ENCODE measurements at regions of chr17 and their contacts with region 1.

Region 1: GRCh38 chr17:27601069-27601975 is 29.7 kb upstream of the LGALS9 start:
- DNase-seq: peak; percentile 87
- ATAC-seq: peak; percentile 43
- H3K4me3 Mint-ChIP-seq: no peak overlapping the region
- H3K27ac Mint-ChIP-seq: no peak overlapping the region
- H3K4me1 Mint-ChIP-seq: peaks cover 19% of the 10 kb centered on the region
- H3K27me3 Mint-ChIP-seq: no peaks in the 10 kb centered on the region

Region 2: GRCh38 chr17:27293898-27294688 is 307.2 kb before region 1 on chr17 and contains the start of gene WSB1:
- CTCF ChIA-PET with region 1: interaction called, 10 read pairs
- DNase-seq: peak; percentile 93
- ATAC-seq: peak; percentile 88
- H3K4me3 Mint-ChIP-seq: peak within 1 kb of the TSS; percentile 93
- H3K27ac Mint-ChIP-seq: peak within 1 kb of the TSS; percentile 99
- H3K4me1 Mint-ChIP-seq: peaks cover 35% of the 10 kb centered on the region
- H3K27me3 Mint-ChIP-seq: no peaks in the 10 kb centered on the region
- total RNA-seq, gene WSB1: 109 to 177 TPM

Region 3: DNA sequence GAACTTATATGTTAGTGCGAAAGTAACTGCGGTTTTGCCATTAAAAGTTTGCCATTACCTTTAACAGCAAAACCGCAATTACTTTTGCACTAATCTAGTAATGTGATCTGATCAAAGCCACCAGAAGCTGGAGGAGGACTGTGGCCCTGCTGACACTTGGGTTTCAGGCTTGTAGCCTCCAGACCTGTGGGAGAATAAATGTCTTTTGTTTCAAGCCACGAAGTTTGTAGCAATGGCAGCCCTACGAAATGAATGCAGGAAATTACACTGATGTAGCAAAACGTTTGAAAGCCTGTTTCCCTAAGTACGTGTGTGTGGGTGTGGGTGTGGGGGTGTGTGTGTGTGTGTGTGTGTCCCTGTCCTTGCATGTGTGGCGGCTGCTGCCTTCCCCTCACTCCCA is 240.8 kb before region 1 on chr17:
- CTCF ChIA-PET with region 1: interaction called, 124 read pairs
- DNase-seq: no peak
- ATAC-seq: no peak
- H3K4me3 Mint-ChIP-seq: no peak overlapping the region
- H3K27ac Mint-ChIP-seq: no peak overlapping the region
- H3K4me1 Mint-ChIP-seq: peaks cover 14% of the 10 kb centered on the region
- H3K27me3 Mint-ChIP-seq: peaks cover 7% of the 10 kb centered on the region

Region 4: DNA sequence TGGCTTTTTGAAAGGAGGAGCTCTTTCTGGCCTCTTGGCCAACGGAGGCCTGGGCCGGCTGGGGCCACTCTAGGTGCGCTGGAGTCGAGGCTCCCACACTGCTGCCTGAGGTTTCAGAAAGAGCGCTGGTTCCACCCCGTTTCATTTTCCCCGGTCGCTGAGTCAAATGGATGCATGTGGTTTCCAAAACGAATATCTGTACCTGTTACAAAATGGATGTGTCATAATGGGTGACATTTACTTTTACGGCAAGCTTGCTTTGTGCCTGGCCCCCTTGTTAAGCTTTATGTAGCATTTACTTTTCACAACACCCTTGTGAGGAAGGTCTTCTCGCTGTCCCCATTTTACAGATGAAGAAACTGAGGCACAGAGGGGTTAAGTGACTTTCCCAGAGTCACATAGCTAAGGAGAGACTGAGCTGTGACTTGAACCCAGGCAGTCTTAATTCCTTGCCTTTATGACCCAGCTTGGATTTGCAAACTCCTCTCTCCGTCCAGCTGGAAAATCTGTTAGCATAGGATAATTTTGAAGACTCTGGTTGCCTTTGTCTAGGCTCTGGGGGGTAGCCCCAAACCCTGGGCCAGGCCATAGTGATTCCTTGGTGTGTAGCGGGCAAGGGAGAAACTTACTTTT is 134.5 kb before region 1 on chr17:
- CTCF ChIA-PET with region 1: interaction called, 33 read pairs
- DNase-seq: peak; percentile 91
- ATAC-seq: peak; percentile 86
- H3K4me3 Mint-ChIP-seq: peak overlapping the region; percentile 63
- H3K27ac Mint-ChIP-seq: peak overlapping the region; percentile 96
- H3K4me1 Mint-ChIP-seq: peaks cover 90% of the 10 kb centered on the region
- H3K27me3 Mint-ChIP-seq: no peaks in the 10 kb centered on the region

Region 5: DNA sequence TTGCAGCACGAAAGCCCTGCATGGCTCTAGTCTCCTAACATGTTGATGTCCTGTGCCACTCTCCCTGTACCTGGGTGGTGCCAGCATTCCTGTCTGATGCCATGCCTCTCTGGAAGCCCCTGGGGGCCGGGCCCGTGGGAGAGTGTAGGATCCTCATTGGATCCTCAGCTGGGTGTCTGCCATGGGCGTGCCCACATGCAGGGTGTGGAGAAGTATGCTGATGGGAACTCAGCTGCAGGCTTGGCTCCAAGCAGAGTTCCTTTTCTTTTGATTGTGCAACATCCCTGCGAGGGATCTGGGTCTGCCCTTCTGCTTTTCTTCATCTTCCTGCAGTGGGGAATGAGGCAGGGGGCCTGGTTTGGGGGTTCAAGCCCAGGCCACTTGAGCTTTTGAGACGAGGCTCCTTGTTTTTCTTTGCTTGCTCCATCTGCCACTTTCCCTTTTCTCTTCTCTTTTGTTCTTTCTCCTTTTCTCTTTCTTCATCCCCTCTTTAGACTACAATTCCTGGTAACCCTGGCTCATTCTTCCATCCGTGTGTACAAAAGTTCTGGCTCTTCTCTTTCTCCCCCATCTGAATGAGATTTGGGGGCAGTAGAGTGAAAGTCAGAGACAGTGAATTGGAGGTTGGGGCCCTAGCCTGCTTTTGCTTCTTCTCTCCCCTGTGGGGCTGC is 112.1 kb before region 1 on chr17:
- CTCF ChIA-PET with region 1: no interaction called
- DNase-seq: no peak
- ATAC-seq: no peak
- H3K4me3 Mint-ChIP-seq: no peak overlapping the region
- H3K27ac Mint-ChIP-seq: no peak overlapping the region
- H3K4me1 Mint-ChIP-seq: peaks cover 31% of the 10 kb centered on the region
- H3K27me3 Mint-ChIP-seq: no peaks in the 10 kb centered on the region

Region 6: DNA sequence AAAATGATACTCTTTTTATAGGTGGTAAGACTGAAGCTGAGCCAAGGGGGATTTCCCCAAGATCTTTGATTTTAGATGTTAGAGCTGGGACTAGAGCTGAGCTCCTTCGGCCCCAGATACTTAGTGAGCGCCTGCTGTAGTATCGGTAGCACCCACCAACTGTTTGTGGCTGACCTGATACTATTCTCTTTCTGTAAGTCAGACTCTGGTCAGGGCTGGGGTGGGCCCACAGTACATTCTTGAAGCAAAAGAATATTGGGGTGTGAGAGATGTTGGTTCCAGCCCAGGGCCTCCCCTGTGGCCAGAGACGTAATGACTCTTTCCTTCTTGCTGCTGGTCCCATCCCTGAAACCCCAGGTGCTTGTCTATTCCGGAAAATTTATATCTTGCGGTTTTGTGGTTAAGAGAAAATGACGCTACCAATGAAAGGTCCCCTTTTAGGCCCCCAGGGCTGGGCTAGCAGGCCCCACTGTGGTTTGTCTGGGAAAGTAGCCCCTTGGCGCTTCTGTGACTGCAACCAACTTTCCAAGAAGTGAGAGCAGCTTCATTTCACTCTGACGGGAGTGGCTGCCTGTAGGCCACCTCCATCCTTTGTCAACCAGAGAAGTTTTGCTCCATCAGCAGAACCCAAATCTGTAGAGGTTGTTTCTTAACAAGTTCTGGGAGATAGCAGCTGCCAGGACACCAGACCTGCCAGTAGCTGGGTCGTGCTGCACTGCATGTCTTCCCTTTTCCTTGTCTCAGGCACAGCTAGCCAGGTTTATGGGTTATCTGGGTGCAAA is 56.8 kb before region 1 on chr17:
- CTCF ChIA-PET with region 1: interaction called, 39 read pairs
- DNase-seq: peak; percentile 92
- ATAC-seq: peak; percentile 80
- H3K4me3 Mint-ChIP-seq: peak overlapping the region; percentile 53
- H3K27ac Mint-ChIP-seq: peak overlapping the region; percentile 80
- H3K4me1 Mint-ChIP-seq: peaks cover 78% of the 10 kb centered on the region
- H3K27me3 Mint-ChIP-seq: no peaks in the 10 kb centered on the region

Region 7: DNA sequence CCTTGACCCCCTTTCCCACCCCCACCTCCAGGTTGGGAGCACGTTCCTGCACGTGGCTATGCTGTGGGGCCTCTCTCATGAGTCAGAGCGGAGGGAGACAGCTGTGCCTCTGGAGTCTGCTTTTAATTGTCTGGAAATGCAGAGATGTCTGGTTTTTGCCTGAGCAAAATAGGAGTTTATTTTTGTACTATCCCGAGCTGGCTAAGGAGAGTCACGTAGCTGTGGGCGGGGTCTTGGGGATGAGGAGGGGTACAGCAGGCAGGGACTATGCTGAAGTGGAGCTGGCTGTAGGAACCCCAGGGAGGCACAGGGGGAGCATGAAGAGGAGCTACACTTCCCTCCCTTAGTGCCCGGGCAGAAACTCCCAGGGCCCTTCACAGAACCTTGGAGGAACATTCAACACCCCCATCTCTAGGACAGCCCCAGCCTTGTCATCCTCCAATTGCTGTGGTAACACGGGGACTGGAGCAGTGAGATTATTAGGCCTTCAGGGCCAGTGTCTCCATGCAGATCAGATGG is 15.1 kb before region 1 on chr17:
- CTCF ChIA-PET with region 1: interaction called, 48 read pairs
- DNase-seq: no peak
- ATAC-seq: no peak
- H3K4me3 Mint-ChIP-seq: no peak overlapping the region
- H3K27ac Mint-ChIP-seq: no peak overlapping the region
- H3K4me1 Mint-ChIP-seq: peaks cover 11% of the 10 kb centered on the region
- H3K27me3 Mint-ChIP-seq: no peaks in the 10 kb centered on the region

Region 8: GRCh38 chr17:27640790-27641189 is 39.5 kb after region 1 on chr17:
- CTCF ChIA-PET with region 1: interaction called, 11 read pairs
- DNase-seq: no peak
- ATAC-seq: no peak
- H3K4me3 Mint-ChIP-seq: no peak overlapping the region
- H3K27ac Mint-ChIP-seq: no peak overlapping the region
- H3K4me1 Mint-ChIP-seq: peaks cover 4% of the 10 kb centered on the region
- H3K27me3 Mint-ChIP-seq: no peaks in the 10 kb centered on the region